ENCODE measurements at regions of chr3 and their contacts with region 1.

Region 1: GRCh38 chr3:42123824-42124658 is 32.9 kb downstream of the TRAK1 start:
- DNase-seq: no peak
- ATAC-seq: no peak

Region 2: GRCh38 chr3:41075975-41076374 is 1048.1 kb before region 1 on chr3:
- intact Hi-C with region 1: no loop called
- DNase-seq: peak; percentile 70
- ATAC-seq: peak; percentile 86 to 91

Region 3: DNA sequence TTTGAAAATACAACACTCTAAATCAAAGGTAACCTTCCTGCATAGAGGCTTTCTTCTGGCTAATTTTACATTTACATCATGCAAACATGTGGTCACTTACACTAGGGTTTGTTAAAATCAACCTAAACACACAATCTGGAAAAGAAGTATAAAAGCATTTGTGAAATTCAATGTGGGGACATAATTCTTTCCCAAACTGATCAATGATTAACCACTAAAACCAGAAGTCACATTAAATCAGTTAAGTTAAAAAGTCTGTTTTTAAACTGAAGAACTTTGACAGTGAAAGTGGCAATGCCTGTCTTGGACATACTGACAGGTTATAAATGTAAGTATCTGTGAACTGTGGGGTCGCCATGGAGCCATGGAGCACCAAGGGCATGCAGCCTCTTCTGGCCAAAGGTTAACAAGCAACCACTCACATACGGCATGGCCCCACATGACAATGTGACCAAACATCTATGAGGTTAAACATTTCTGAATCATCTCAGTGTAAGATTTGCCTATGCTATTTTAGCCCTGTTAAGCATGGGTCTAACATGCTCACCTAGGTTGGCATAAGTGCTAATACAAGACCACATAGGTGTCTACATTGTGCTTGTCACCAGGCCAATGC is 646.5 kb before region 1 on chr3:
- intact Hi-C with region 1: no loop called
- DNase-seq: no peak
- ATAC-seq: no peak

Region 4: DNA sequence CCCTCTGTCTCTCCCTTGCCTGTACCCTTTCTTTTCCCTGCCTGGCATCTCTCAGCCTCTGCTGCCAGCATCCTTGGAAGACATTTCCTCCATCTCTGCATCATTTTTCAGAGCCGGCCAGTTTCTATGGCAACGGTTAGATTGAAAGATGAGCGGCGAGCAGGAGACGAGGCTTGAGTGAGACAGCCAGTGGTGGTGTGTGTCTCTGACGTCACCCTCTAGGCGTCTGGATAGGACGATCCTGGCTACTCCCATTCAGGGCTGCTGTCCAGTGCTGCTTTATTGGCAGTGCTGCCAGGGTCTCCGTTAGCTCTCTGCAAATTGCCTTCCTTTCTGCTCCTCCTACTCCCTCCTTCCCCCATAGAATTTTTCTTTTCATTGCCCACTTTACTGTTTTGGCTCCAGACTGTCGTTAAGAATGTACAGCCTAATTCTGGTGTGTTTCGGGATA is 25.0 kb after region 1 on chr3:
- intact Hi-C with region 1: loop called in 1 of 2 experiments (anchors 2 kb)
- DNase-seq: peak; percentile 79
- ATAC-seq: peak; percentile 98 to 99

Measured in left cardiac atrium (tissue), 4 donors.